PC-3 (cell line): ENCODE measurements at regions of chr16 and their contacts with region 1.

Region 1: GRCh38 chr16:72501739-72502593 is 330.0 kb upstream of the PMFBP1 start:
- DNase-seq: peak; percentile 69
- ATAC-seq: peak; percentile 71
- H3K4me3 ChIP-seq: no peak overlapping the region
- H3K27ac ChIP-seq: no peak overlapping the region
- H3K4me1 ChIP-seq: no peaks in the 10 kb centered on the region
- H3K27me3 ChIP-seq: no peaks in the 10 kb centered on the region
- CTCF ChIP-seq: peak; percentile 88

Region 2: DNA sequence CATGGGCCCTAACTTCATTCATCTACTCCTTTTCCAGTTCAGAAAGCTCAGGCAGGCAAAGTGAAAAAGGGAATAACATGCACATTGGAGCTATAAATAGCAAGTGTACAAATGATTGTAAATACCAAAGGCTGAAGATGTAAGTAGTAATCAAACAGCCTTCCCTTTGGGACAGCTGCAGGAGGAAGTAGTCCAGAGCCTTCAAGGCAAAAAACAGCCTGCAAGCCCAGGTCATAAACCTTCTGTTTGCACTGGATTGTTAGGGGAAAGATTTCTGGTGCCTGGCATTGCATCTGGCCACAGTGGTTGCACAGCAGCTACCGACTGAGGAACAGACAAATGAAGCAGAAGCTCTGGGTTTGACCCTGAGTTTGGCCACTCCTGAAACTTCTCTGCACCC is 231.4 kb before region 1 on chr16:
- CTCF ChIA-PET with region 1: no interaction called
- POLR2A ChIA-PET with region 1: no interaction called
- intact Hi-C with region 1: no loop called
- DNase-seq: no peak
- ATAC-seq: no peak
- H3K4me3 ChIP-seq: no peak overlapping the region
- H3K27ac ChIP-seq: no peak overlapping the region
- H3K4me1 ChIP-seq: no peaks in the 10 kb centered on the region
- H3K27me3 ChIP-seq: no peaks in the 10 kb centered on the region
- CTCF ChIP-seq: no peak

Region 3: GRCh38 chr16:72324578-72324977 is 177.4 kb before region 1 on chr16:
- CTCF ChIA-PET with region 1: no interaction called
- POLR2A ChIA-PET with region 1: no interaction called
- intact Hi-C with region 1: no loop called
- DNase-seq: no peak
- ATAC-seq: no peak
- H3K4me3 ChIP-seq: no peak overlapping the region
- H3K27ac ChIP-seq: no peak overlapping the region
- H3K4me1 ChIP-seq: no peaks in the 10 kb centered on the region
- H3K27me3 ChIP-seq: no peaks in the 10 kb centered on the region
- CTCF ChIP-seq: no peak

Region 4: GRCh38 chr16:72664509-72665225 is 162.7 kb after region 1 on chr16:
- CTCF ChIA-PET with region 1: interaction called, 3 read pairs
- POLR2A ChIA-PET with region 1: no interaction called
- intact Hi-C with region 1: loop called (anchors 10 kb)
- DNase-seq: peak; percentile 94
- ATAC-seq: peak; percentile 100
- H3K4me3 ChIP-seq: peak overlapping the region; percentile 91
- H3K27ac ChIP-seq: peak overlapping the region; percentile 54
- H3K4me1 ChIP-seq: peaks cover 4% of the 10 kb centered on the region; the same call in 1 of the 2 replicates
- H3K27me3 ChIP-seq: no peaks in the 10 kb centered on the region
- CTCF ChIP-seq: no peak

Region 5: GRCh38 chr16:72787514-72788268 is 285.7 kb after region 1 on chr16:
- CTCF ChIA-PET with region 1: no interaction called
- POLR2A ChIA-PET with region 1: no interaction called
- intact Hi-C with region 1: loop called (anchors 10 kb)
- DNase-seq: peak; percentile 70
- ATAC-seq: peak; percentile 79
- H3K4me3 ChIP-seq: peak overlapping the region; percentile 56
- H3K27ac ChIP-seq: peak overlapping the region; percentile 63
- H3K4me1 ChIP-seq: peaks cover 17% of the 10 kb centered on the region
- H3K27me3 ChIP-seq: no peaks in the 10 kb centered on the region
- CTCF ChIP-seq: no peak

Region 6: GRCh38 chr16:72832621-72833248 is 330.8 kb after region 1 on chr16:
- CTCF ChIA-PET with region 1: interaction called, 5 read pairs
- POLR2A ChIA-PET with region 1: no interaction called
- intact Hi-C with region 1: loop called (anchors 10 kb)
- DNase-seq: peak; percentile 81
- ATAC-seq: peak; percentile 67
- H3K4me3 ChIP-seq: no peak overlapping the region
- H3K27ac ChIP-seq: no peak overlapping the region
- H3K4me1 ChIP-seq: peaks cover 5% of the 10 kb centered on the region; the same call in 1 of the 2 replicates
- H3K27me3 ChIP-seq: no peaks in the 10 kb centered on the region
- CTCF ChIP-seq: peak; percentile 92

Region 7: GRCh38 chr16:73196670-73197069 is 694.7 kb after region 1 on chr16:
- CTCF ChIA-PET with region 1: no interaction called
- POLR2A ChIA-PET with region 1: no interaction called
- intact Hi-C with region 1: loop called (anchors 2 kb)
- DNase-seq: peak; percentile 68
- ATAC-seq: peak; percentile 70
- H3K4me3 ChIP-seq: no peak overlapping the region
- H3K27ac ChIP-seq: no peak overlapping the region
- H3K4me1 ChIP-seq: no peaks in the 10 kb centered on the region
- H3K27me3 ChIP-seq: no peaks in the 10 kb centered on the region
- CTCF ChIP-seq: peak; percentile 69

Region 8: GRCh38 chr16:73878611-73879010 is 1376.6 kb after region 1 on chr16:
- CTCF ChIA-PET with region 1: no interaction called
- POLR2A ChIA-PET with region 1: no interaction called
- intact Hi-C with region 1: loop called (anchors 10 kb)
- DNase-seq: peak; percentile 62
- ATAC-seq: peak; percentile 61
- H3K4me3 ChIP-seq: no peak overlapping the region
- H3K27ac ChIP-seq: no peak overlapping the region
- H3K4me1 ChIP-seq: no peaks in the 10 kb centered on the region
- H3K27me3 ChIP-seq: peaks cover 43% of the 10 kb centered on the region
- CTCF ChIP-seq: peak; percentile 57